ENCODE measurements at regions of chr6 and their contacts with region 1.

Region 1: DNA sequence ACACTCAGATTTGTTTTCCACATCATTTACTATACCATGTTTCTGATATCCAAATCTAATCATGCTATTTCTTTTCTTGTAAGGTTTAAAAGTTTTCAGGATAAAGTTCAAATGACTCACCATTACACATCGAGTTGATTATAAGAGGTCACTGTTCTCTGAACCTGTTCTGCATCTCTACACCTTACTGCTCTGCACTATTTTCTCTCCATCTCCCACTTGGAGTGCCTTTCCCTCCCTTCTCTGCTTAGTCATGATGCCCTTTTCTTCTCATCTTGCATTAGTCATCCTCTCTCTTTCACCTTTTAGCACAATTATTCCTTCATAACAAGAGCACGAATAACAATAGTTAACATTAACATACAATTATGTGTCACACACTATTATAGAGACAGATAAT is 37.5 kb upstream of the FUT9 start:
- DNase-seq: no peak
- H3K4me3 ChIP-seq: no peak overlapping the region
- H3K27ac ChIP-seq: no peak overlapping the region
- H3K4me1 ChIP-seq: no peaks in the 10 kb centered on the region
- H3K27me3 ChIP-seq: no peaks in the 10 kb centered on the region
- CTCF ChIP-seq: no peak
- POLR2A ChIP-seq: no peak

Region 2: DNA sequence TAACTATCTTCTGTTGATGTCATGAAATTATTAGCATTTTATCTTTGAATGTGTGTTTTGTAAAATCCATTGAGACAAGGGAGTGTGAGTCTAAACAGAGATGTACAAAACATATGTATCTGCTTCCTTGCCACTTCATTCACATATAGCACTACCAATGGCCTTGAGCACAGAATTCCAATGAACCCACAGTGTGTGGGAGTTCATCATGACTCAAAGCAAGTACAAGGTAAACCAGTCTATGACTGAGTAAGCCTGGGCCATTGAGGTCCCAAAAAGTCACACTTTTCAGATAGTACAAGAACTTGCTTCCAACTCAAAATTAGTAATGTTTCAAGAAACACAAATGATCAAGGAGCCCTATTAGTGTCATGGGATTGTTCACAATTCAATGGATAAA is 182.3 kb before region 1 on chr6:
- intact Hi-C with region 1: loop called (anchors 10 kb)
- DNase-seq: no peak
- H3K4me3 ChIP-seq: no peak overlapping the region
- H3K27ac ChIP-seq: no peak overlapping the region
- H3K4me1 ChIP-seq: no peaks in the 10 kb centered on the region
- H3K27me3 ChIP-seq: no peaks in the 10 kb centered on the region
- CTCF ChIP-seq: no peak
- POLR2A ChIP-seq: no peak

Region 3: DNA sequence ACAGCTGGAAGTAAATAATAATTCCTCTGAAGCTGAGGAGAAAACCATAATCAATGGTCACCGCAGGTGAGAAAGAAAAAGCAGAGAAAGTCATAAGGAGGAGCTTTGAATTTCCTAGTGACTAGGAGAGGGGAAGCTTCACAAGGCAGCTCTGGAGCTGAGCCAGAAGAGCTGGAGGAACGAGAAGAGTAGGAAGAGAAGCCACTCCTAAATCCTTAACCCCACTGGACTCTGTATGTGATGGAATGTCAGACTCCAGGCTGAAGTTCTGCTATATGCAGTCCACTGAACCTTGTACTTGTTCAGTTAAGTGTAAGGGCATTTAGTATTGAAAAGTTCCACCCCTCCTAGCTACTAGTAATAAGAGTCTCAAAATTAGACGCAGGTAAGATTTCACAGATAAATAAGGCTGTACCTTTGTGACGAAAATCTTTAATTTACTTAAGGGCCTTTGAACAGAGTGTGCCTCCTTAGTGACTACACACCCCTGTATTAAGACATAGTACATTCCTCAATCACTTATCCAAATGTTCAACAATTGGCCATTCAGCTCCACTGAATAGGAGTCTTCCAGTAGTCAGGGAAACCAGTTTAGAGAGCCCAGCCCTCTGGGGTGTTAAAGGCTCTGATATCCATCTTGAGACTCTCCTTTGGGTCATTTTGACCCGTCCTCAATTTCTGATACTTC is 472.0 kb after region 1 on chr6:
- intact Hi-C with region 1: no loop called
- DNase-seq: no peak
- H3K4me3 ChIP-seq: no peak overlapping the region
- H3K27ac ChIP-seq: peak overlapping the region; percentile 15 to 40
- H3K4me1 ChIP-seq: no peaks in the 10 kb centered on the region
- H3K27me3 ChIP-seq: no peaks in the 10 kb centered on the region
- CTCF ChIP-seq: no peak
- POLR2A ChIP-seq: no peak

Measured in breast epithelium (tissue), 4 donors.